ENCODE measurements at regions of chr2 and their contacts with region 1.

Region 1: DNA sequence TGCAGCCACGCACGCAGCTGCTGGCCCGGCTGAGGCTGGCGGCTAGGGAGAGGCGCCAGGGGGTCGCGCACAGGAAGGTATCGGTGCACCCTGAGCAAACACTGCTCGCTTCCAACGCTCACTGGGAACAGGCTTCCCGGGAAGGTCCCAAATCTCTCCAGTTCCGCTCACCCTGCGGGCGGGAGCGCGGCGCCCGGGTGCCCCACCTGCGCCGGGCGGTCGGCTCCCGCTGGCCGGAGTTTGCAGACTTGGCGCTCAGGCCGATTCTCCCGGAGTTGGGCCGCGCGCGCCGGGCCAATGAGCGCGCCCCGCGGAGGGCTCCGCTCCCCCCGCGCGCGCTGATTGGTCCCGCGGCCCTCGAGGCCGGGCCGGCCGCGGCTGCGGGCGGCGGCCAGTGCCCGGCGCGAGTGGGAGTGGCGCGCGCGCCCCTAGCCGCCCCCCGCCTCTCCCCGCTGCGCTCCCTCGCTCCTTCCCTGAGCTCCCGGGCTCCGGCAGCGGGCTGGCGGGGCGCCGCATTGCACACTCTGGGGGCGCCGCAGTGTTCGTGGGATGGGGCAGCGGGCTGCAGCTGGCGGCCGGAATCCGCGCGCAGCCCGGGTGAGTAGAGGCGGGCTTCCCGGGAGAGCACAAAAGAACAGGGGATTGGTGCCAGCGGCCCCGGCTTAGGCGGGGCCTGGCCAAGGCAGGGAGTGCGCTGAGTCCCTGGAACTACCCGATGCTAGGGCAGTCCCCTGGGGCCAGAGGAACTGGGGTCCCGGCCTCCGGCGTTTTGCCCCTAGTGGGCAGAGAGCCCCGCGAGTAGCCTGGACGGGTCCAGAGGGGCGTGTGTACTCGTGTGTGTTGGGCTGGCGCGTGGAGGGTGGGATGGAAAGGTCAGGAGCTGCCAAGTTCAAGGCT is at the start of gene LYPD6:
- DNase-seq: peak; percentile 32 to 67
- H3K4me3 ChIP-seq: peak within 1 kb of the TSS; percentile 51 to 73 (median 71)
- H3K27ac ChIP-seq: peak within 1 kb of the TSS; percentile 30 to 52
- H3K4me1 ChIP-seq: no peaks in the 10 kb centered on the region
- H3K27me3 ChIP-seq: no peaks in the 10 kb centered on the region
- CTCF ChIP-seq: no peak
- POLR2A ChIP-seq: no peak
- total RNA-seq, gene LYPD6: 0.16 to 17.7 (median 3.9) TPM

Region 2: DNA sequence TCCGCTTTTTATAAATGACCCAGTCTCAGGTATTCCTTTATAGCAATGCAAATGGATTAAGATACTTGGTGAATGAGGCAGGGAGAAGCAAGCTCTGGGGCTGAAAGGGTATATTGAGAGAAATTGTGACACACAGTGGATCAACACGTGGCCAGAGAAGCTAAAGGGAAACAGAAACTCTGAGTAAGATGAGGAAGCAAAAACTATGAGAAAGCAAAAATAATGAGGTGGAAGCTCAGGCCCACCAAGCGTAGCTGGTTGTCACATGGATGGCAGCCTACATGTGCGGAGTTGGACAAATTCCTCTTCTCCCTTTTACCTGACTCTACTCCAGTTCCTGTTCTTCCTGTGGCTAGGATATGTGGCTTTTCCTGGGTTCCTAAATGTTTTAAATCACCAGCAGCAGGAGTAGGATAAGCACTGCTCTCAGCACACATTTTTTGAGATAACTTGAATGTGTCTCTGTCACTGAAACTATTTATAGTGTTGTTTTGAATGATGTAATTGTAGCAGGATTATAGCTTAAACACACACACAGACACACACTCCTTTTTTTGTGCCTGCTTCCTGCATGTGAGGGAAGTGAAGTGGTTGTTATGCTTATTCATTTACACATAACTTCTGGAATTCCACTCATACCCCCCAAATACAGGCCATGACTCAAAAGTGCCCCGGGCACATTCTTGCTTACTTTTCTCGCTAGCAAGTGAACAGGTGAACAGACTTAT is 715.9 kb before region 1 on chr2:
- intact Hi-C with region 1: no loop called
- DNase-seq: peak in 1 of 2 donors; percentile 40
- H3K4me3 ChIP-seq: no peak overlapping the region
- H3K27ac ChIP-seq: peak overlapping the region; percentile 15 to 26
- H3K4me1 ChIP-seq: peaks cover 0 to 3% of the 10 kb centered on the region in 2 donors
- H3K27me3 ChIP-seq: no peaks in the 10 kb centered on the region
- CTCF ChIP-seq: no peak
- POLR2A ChIP-seq: no peak

Region 3: DNA sequence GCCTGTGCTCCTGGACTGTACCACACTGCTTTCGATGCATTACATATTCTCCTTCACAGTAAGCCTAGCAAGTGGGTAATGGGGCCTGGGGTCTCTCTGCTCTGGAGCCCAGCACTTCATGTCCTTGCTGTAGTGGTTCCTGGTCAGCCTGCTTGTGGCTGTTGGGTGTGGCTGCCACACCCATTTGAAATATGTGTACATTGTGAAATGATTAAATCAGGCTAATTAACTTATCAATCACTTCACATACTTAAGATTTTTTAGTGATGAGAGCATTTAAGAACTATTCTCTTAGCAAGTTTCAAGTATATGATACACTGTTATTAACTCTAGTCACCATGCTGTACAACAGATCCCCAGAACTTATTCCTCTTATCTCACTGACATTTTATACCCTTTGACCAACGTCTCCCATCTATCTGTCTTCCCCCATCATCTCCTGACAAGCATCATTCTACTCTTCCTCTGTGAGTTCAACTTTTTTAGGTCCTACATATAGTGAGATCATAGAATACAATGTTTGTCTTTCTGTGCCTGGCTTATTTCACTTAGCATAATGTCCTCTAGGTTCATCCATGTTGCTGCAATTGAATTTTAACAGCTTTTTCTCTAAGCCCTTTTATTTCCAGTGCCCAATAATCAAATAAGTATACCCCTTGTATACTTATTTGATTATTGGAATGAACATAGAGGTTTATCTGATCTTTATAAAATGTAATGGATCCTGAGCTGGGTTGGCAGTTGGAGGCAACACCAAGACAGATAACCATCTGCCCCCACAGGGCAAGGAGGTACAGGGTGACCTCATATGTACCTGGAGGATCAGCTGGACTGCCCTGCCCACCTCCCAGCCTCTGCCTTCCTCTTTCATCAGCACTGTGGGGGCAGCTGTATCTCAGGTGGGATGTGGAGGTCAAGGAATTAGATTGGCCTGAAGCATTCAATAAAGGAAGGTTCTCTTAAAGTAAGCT is 92.2 kb after region 1 on chr2:
- intact Hi-C with region 1: no loop called
- DNase-seq: no peak
- H3K4me3 ChIP-seq: no peak overlapping the region
- H3K27ac ChIP-seq: no peak overlapping the region
- H3K4me1 ChIP-seq: peaks cover 0 to 3% of the 10 kb centered on the region in 2 donors
- H3K27me3 ChIP-seq: no peaks in the 10 kb centered on the region
- CTCF ChIP-seq: no peak
- POLR2A ChIP-seq: no peak

Region 4: DNA sequence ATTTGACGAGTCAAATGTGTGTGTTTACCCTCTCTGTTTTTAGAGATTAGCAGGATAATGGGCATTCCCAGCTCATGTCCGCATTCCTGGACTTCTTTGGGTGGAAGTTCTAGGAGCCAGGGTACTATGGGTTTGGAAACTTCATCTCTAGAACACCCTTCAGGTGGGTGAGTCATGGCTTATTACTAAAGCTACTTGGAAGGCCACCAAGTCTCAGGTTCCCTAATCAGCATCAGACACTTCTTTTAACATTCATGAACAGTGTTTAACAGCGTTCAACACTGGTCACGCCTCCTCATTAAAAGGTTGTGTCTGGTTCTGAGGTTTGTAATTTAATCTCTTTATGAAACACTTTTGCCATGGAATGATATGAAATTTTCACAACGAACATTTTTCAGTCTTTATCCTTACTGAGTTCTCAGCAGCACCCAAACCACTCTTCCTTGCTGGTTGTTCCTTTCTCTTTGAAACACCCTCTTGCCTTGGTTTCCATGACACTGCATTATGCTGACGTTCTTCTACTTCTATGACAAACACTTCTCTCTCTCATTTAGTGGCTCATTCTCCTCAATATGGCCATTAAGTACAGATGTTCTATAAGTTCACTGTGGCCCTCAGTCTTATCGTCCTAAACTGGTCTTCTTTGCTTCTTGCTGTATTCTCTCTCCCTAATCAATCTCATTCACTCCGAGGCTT is 207.9 kb after region 1 on chr2:
- intact Hi-C with region 1: no loop called
- DNase-seq: no peak
- H3K4me3 ChIP-seq: no peak overlapping the region
- H3K27ac ChIP-seq: no peak overlapping the region
- H3K4me1 ChIP-seq: no peaks in the 10 kb centered on the region
- H3K27me3 ChIP-seq: no peaks in the 10 kb centered on the region
- CTCF ChIP-seq: no peak
- POLR2A ChIP-seq: no peak

Region 5: GRCh38 chr2:150389447-150389846 is 1059.1 kb after region 1 on chr2:
- intact Hi-C with region 1: loop called (anchors 5 kb)
- DNase-seq: no peak
- H3K4me3 ChIP-seq: no peak overlapping the region
- H3K27ac ChIP-seq: no peak overlapping the region
- H3K4me1 ChIP-seq: no peaks in the 10 kb centered on the region
- H3K27me3 ChIP-seq: no peaks in the 10 kb centered on the region
- CTCF ChIP-seq: no peak
- POLR2A ChIP-seq: no peak

Region 6: GRCh38 chr2:150878356-150878755 is 1548.0 kb after region 1 on chr2:
- intact Hi-C with region 1: loop called (anchors 5 kb)
- DNase-seq: no peak
- H3K4me3 ChIP-seq: no peak overlapping the region
- H3K27ac ChIP-seq: no peak overlapping the region
- H3K4me1 ChIP-seq: no peaks in the 10 kb centered on the region
- H3K27me3 ChIP-seq: no peaks in the 10 kb centered on the region
- CTCF ChIP-seq: no peak
- POLR2A ChIP-seq: no peak

Region 7: DNA sequence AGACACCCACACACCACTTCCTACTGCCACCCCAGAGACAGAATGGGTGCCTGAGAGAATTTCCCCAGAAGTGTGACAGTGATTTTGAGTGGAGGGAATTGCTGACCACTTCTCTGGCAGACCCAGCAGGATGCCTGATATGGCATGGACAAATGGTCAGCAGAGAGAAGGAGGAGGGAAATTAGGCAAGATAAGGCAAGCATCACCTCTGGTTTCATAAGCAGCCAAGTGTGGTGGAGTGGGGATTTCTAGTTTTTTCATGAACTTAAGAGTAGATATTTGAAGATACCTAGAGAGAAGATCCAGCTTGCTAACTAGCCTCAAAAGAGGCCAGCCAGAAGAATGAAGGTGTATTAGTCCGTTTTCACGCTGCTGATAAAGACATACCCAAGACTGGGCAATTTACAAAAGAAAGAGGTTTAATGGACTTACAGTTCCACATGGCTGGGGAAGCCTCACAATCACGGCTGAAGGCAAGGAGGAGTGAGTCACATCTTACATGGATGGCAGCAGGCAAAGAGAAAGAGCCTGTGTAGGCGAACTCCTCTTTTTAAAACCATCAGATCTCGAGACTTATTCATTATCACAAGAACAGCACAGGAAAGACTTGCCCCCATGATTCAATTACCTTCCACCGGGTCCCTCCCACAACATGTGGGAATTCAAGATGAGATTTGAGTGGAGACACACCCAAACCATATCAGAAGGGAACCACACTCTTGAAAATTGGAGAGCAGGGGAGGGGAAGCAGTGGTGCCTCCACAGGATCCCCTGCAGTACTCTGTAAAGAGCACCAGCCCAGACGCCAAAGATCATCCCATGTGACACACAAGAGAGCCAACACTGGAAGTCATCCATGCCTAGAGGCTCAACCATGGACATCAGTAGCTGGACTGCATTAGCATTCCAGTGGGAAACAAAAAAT is 1867.1 kb after region 1 on chr2:
- intact Hi-C with region 1: no loop called
- DNase-seq: peak in 1 of 2 donors; percentile 19
- H3K4me3 ChIP-seq: no peak overlapping the region
- H3K27ac ChIP-seq: no peak overlapping the region
- H3K4me1 ChIP-seq: no peaks in the 10 kb centered on the region
- H3K27me3 ChIP-seq: no peaks in the 10 kb centered on the region
- CTCF ChIP-seq: no peak
- POLR2A ChIP-seq: no peak